ENCODE measurements at regions of chr1 and their contacts with region 1.

Region 1: GRCh38 chr1:231337472-231338269 is at the start of gene EXOC8:
- DNase-seq: peak; percentile 97
- H3K4me3 Mint-ChIP-seq: peak within 1 kb of the TSS; percentile 100
- H3K27ac Mint-ChIP-seq: peak within 1 kb of the TSS; percentile 97
- H3K4me1 Mint-ChIP-seq: peaks cover 53% of the 10 kb centered on the region
- H3K27me3 Mint-ChIP-seq: no peaks in the 10 kb centered on the region
- total RNA-seq, gene EXOC8: 11.5 to 12.0 TPM

Region 2: DNA sequence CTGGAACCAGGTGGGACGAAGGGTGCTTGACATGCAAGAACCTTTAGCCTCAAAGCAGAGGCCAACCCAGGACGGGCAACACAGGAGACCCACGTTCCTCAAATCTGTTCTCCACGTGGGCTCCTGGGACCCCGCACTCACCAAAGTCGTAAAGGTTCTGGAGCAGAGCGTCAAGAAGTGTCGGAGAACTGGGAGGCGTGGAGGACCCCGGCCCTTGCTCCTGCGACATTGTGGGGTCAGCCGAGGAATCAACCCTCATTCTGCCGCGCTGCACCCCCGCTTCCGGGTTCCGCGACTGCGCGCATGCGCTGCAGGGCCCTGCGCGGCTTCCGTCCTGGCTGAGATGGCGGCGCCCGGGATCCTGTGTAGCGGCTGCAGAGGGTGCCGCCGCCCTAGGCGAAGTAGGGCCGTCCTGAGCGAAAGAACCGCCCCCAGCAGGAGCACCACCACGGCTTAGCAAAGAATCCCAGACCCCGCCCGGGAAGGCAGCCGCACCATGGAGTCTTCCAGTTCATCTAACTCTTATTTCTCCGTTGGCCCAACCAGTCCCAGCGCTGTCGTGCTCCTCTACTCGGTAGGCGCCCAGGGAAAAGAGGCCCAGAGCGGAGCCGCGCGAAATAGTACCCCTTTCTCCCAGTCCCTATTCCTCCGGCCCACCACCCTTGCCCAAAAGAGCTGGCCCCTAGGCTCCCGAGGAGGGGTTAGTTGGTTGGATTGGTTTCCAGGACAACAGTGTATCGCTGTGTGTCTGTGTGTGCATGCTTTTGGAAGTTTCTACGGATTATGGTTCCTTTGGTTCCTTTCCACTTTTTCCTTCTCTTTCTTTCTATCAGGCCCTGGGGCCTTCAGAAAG is 96.6 kb before region 1 on chr1 and contains the start of gene GNPAT:
- CTCF ChIA-PET with region 1: no interaction called
- intact Hi-C with region 1: loop called (anchors 1 kb)
- DNase-seq: peak; percentile 90
- H3K4me3 Mint-ChIP-seq: peak within 1 kb of the TSS; percentile 97
- H3K27ac Mint-ChIP-seq: peak within 1 kb of the TSS; percentile 82
- H3K4me1 Mint-ChIP-seq: peaks cover 58% of the 10 kb centered on the region
- H3K27me3 Mint-ChIP-seq: no peaks in the 10 kb centered on the region
- total RNA-seq, gene GNPAT: 60.4 to 62.0 TPM

Region 3: DNA sequence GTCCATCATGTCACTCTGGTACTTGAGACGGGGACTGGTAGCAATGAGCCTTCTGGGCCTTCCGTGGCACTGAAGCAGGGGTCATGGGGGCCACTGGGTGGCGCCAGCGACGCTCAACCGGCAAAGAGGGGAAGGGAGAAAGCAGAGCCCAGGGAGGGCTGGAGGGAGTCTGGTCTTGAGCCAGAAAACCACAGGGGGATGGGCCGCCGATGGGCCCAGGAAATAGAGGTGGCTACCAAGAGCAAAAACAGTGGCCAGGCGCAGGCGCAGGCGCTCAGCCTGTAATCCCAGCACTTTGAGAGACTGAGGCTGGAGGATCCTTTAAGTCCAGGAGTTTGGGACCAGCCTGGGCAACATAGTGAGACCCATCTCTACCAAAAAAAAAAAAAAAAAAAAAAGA is 21.8 kb before region 1 on chr1:
- CTCF ChIA-PET with region 1: interaction called, 24 read pairs
- intact Hi-C with region 1: no loop called
- DNase-seq: peak; percentile 62
- H3K4me3 Mint-ChIP-seq: no peak overlapping the region
- H3K27ac Mint-ChIP-seq: no peak overlapping the region
- H3K4me1 Mint-ChIP-seq: no peaks in the 10 kb centered on the region
- H3K27me3 Mint-ChIP-seq: no peaks in the 10 kb centered on the region

Region 4: GRCh38 chr1:231603598-231604275 is 266.1 kb after region 1 on chr1:
- CTCF ChIA-PET with region 1: interaction called, 5 read pairs
- intact Hi-C with region 1: loop called (anchors 1 kb)
- DNase-seq: peak; percentile 42
- H3K4me3 Mint-ChIP-seq: peak overlapping the region; percentile 85
- H3K27ac Mint-ChIP-seq: peak overlapping the region; percentile 74
- H3K4me1 Mint-ChIP-seq: peaks cover 8% of the 10 kb centered on the region
- H3K27me3 Mint-ChIP-seq: no peaks in the 10 kb centered on the region

Region 5: GRCh38 chr1:232805269-232806185 is 1467.9 kb after region 1 on chr1 and contains the start of gene MAP10:
- CTCF ChIA-PET with region 1: no interaction called
- intact Hi-C with region 1: loop called (anchors 5 kb)
- DNase-seq: peak; percentile 85
- H3K4me3 Mint-ChIP-seq: peak within 1 kb of the TSS; percentile 81
- H3K27ac Mint-ChIP-seq: peak within 1 kb of the TSS; percentile 59
- H3K4me1 Mint-ChIP-seq: peaks cover 17% of the 10 kb centered on the region
- H3K27me3 Mint-ChIP-seq: peaks cover 2% of the 10 kb centered on the region
- total RNA-seq, gene MAP10: 0.43 to 0.54 TPM